ENCODE measurements at regions of chr7 and their contacts with region 1.

Region 1: GRCh38 chr7:30740424-30741181 is 11.3 kb upstream of the INMT start:
- DNase-seq: peak; percentile 86 to 89
- H3K4me3 ChIP-seq: no peak overlapping the region
- H3K4me3 Mint-ChIP-seq: no peak overlapping the region
- H3K27ac Mint-ChIP-seq: no peak overlapping the region
- H3K4me1 ChIP-seq: peaks cover 4% of the 10 kb centered on the region; the same call in 1 of the 2 replicates
- H3K4me1 Mint-ChIP-seq: peaks cover 10% of the 10 kb centered on the region
- H3K27me3 ChIP-seq: no peaks in the 10 kb centered on the region; the same call in 1 of the 2 replicates
- H3K27me3 Mint-ChIP-seq: peaks cover 6% of the 10 kb centered on the region
- CTCF ChIP-seq: peak; percentile 96 to 98

Region 2: GRCh38 chr7:30548762-30549344 is 191.8 kb before region 1 on chr7:
- CTCF ChIA-PET with region 1: no interaction called
- POLR2A ChIA-PET with region 1: no interaction called
- intact Hi-C with region 1: loop called (anchors 1 kb)
- DNase-seq: peak; percentile 70 to 76
- H3K4me3 ChIP-seq: no peak overlapping the region
- H3K4me3 Mint-ChIP-seq: no peak overlapping the region
- H3K27ac Mint-ChIP-seq: no peak overlapping the region
- H3K4me1 ChIP-seq: peaks cover 9% of the 10 kb centered on the region
- H3K4me1 Mint-ChIP-seq: peaks cover 12% of the 10 kb centered on the region
- H3K27me3 ChIP-seq: no peaks in the 10 kb centered on the region
- H3K27me3 Mint-ChIP-seq: peaks cover 4% of the 10 kb centered on the region
- CTCF ChIP-seq: peak; percentile 76 to 88

Region 3: DNA sequence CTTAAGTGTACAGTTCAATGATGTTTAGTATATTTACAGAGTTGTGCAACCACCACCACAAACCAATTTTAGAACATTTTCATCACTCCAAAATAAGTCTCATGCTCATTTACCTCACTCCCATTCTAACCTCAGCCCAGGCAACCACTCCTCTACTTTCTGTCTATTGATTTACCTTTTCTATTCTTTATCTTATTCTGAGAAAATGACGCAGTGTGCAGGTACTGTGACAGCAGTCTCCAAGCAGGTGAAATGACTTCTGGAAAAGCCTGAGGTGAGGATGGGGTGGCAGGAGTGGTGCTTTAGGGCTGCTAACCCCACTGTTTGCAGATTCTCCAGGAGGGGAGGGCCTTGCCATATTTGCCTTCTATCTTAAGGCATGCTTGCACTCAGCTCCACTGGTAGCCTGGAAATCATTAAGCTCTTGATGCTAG is 106.4 kb before region 1 on chr7:
- CTCF ChIA-PET with region 1: interaction called, 4 read pairs
- POLR2A ChIA-PET with region 1: no interaction called
- intact Hi-C with region 1: loop called (anchors 2 kb)
- DNase-seq: peak; percentile 42 to 43
- H3K4me3 ChIP-seq: no peak overlapping the region
- H3K4me3 Mint-ChIP-seq: no peak overlapping the region
- H3K27ac Mint-ChIP-seq: no peak overlapping the region
- H3K4me1 ChIP-seq: no peaks in the 10 kb centered on the region
- H3K4me1 Mint-ChIP-seq: no peaks in the 10 kb centered on the region
- H3K27me3 ChIP-seq: no peaks in the 10 kb centered on the region
- H3K27me3 Mint-ChIP-seq: no peaks in the 10 kb centered on the region
- CTCF ChIP-seq: no peak

Region 4: DNA sequence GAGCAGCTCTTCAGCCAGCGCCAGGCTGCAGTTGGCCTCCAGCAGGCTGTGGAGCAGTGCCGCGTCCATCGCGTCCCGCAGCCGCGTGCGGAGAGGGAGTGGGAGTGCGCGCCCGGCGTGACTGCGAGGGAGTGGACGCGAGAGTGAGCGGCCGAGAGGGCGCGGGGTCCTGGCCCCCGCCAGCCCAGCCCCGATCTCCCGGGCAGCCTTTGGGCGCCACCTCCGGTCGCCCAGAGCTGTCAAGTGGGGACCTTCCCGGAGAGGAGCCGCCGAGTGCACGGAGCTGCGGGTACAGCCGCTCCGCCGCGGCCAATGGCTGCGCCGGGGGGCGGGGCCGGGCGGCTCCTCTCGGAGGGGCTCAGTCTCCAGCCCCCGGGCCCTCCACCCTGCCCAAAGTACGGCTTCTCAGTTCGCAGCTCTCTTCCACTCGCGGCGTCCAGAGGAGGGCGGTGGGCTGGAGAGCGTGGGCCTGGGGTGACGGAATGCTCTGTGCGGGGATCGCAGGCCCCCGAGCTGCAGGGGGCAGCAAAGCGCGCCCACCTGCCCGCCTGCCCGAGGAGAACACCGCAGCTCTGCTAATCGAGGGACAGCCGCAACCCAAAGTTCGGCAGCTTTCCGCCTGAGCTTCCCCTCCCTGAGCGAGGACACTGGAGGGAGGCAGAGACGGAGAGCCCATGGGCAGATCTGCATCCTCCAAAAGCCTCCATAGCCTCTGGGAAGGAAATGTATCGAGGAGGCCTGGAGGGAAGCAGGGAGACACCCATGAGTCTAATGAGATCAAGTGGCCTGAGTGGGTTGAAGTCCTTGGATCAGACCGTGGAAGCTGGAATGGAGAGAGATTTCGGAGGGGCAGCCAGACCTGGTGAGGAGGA is 58.2 kb before region 1 on chr7 and contains the start of gene CRHR2:
- CTCF ChIA-PET with region 1: interaction called, 3 read pairs
- POLR2A ChIA-PET with region 1: no interaction called
- intact Hi-C with region 1: loop called (anchors 5 kb)
- DNase-seq: no peak
- H3K4me3 ChIP-seq: no peak within 1 kb of the TSS
- H3K4me3 Mint-ChIP-seq: no peak within 1 kb of the TSS
- H3K27ac Mint-ChIP-seq: no peak within 1 kb of the TSS
- H3K4me1 ChIP-seq: peaks cover 9% of the 10 kb centered on the region; the same call in 1 of the 2 replicates
- H3K4me1 Mint-ChIP-seq: peaks cover 6% of the 10 kb centered on the region
- H3K27me3 ChIP-seq: no peaks in the 10 kb centered on the region
- H3K27me3 Mint-ChIP-seq: peaks cover 7% of the 10 kb centered on the region
- CTCF ChIP-seq: no peak
- total RNA-seq, gene CRHR2: not detected in 2 replicates

Region 5: GRCh38 chr7:30888747-30889146 is 148.1 kb after region 1 on chr7:
- CTCF ChIA-PET with region 1: no interaction called
- POLR2A ChIA-PET with region 1: no interaction called
- intact Hi-C with region 1: loop called (anchors 10 kb)
- DNase-seq: no peak
- H3K4me3 ChIP-seq: no peak overlapping the region
- H3K4me3 Mint-ChIP-seq: no peak overlapping the region
- H3K27ac Mint-ChIP-seq: peak overlapping the region; percentile 2
- H3K4me1 ChIP-seq: no peaks in the 10 kb centered on the region; the same call in 1 of the 2 replicates
- H3K4me1 Mint-ChIP-seq: no peaks in the 10 kb centered on the region
- H3K27me3 ChIP-seq: no peaks in the 10 kb centered on the region
- H3K27me3 Mint-ChIP-seq: no peaks in the 10 kb centered on the region
- CTCF ChIP-seq: no peak

Region 6: GRCh38 chr7:31122649-31123058 is 382.1 kb after region 1 on chr7:
- CTCF ChIA-PET with region 1: no interaction called
- POLR2A ChIA-PET with region 1: no interaction called
- intact Hi-C with region 1: loop called (anchors 10 kb)
- DNase-seq: peak; percentile 68 to 70
- H3K4me3 ChIP-seq: no peak overlapping the region
- H3K4me3 Mint-ChIP-seq: no peak overlapping the region
- H3K27ac Mint-ChIP-seq: no peak overlapping the region
- H3K4me1 ChIP-seq: no peaks in the 10 kb centered on the region
- H3K4me1 Mint-ChIP-seq: no peaks in the 10 kb centered on the region
- H3K27me3 ChIP-seq: no peaks in the 10 kb centered on the region
- H3K27me3 Mint-ChIP-seq: peaks cover 7% of the 10 kb centered on the region
- CTCF ChIP-seq: peak; percentile 85 to 87